ENCODE measurements at regions of chr17 and their contacts with region 1.

Region 1: DNA sequence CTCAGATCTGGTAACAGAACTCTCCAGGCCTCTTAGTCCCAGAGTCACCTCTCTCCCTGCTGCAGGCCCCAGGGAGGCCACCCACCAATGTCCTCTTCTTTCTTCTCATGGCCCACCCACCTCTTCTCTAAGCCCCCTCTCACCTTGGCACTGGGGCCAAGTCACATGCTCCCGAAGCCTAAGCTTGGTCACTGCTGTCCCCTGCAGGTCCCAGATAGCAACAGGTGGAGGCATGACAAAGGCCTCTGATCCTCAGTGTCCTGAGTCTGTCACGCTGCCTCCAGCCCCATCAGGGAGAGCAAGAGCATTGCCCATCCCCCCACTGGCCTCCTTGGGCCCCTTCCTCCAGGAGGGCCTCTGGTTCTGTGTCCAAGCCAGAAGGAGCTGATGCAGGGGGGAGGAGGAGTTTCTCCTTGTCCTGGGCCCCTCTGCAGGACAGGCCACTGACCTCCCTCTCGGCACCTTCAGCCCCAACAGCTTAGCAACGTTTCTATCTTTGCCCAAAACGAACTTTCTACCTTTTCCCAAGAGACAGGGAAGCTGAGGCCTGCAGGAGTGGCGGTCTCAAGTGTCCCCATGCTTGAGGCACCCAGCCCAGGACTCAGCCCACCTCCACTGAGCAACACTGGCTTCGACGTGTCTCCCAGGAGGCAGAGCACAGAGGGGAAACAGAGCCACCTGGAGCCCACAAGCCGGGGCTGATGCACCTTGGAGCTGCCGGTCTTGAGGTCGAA is 8.6 kb downstream of the P2RX1 start:
- DNase-seq: peak; percentile 38
- H3K4me3 Mint-ChIP-seq: no peak overlapping the region
- H3K27ac Mint-ChIP-seq: no peak overlapping the region
- H3K4me1 Mint-ChIP-seq: no peaks in the 10 kb centered on the region
- H3K27me3 Mint-ChIP-seq: no peaks in the 10 kb centered on the region
- CTCF ChIP-seq: peak; percentile 28

Region 2: DNA sequence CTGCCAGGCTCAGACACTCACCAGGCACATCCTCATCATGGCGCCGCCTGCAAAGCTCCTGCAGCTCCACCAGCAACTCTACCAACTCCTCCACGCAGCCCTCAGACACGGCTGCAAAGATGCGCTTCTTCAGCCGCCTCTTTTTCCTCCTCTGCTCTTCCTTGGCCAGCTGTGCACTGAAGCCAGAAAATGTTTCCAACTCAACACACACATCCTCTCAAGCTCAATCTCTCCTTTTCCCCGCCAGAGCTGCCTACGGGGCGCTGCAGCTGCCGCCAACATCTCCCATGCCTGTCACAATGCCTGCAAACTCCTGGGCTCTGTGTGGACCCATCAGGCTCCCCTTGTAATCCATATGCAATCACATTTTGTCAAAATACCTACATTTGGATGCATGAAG is 364.2 kb before region 1 on chr17:
- CTCF ChIA-PET with region 1: no interaction called
- POLR2A ChIA-PET with region 1: no interaction called
- intact Hi-C with region 1: no loop called
- DNase-seq: no peak
- H3K4me3 Mint-ChIP-seq: no peak overlapping the region
- H3K27ac Mint-ChIP-seq: no peak overlapping the region
- H3K4me1 Mint-ChIP-seq: no peaks in the 10 kb centered on the region
- H3K27me3 Mint-ChIP-seq: no peaks in the 10 kb centered on the region
- CTCF ChIP-seq: no peak

Region 3: GRCh38 chr17:3859940-3860339 is 47.7 kb before region 1 on chr17:
- CTCF ChIA-PET with region 1: interaction called, 12 read pairs
- POLR2A ChIA-PET with region 1: no interaction called
- intact Hi-C with region 1: loop called (anchors 1 kb)
- DNase-seq: no peak
- H3K4me3 Mint-ChIP-seq: no peak overlapping the region
- H3K27ac Mint-ChIP-seq: no peak overlapping the region
- H3K4me1 Mint-ChIP-seq: no peaks in the 10 kb centered on the region
- H3K27me3 Mint-ChIP-seq: no peaks in the 10 kb centered on the region
- CTCF ChIP-seq: no peak

Region 4: GRCh38 chr17:3865176-3865575 is 42.5 kb before region 1 on chr17:
- CTCF ChIA-PET with region 1: interaction called, 12 read pairs
- POLR2A ChIA-PET with region 1: no interaction called
- intact Hi-C with region 1: loop called (anchors 1 kb)
- DNase-seq: peak; percentile 11
- H3K4me3 Mint-ChIP-seq: no peak overlapping the region
- H3K27ac Mint-ChIP-seq: no peak overlapping the region
- H3K4me1 Mint-ChIP-seq: no peaks in the 10 kb centered on the region
- H3K27me3 Mint-ChIP-seq: no peaks in the 10 kb centered on the region
- CTCF ChIP-seq: no peak

Region 5: DNA sequence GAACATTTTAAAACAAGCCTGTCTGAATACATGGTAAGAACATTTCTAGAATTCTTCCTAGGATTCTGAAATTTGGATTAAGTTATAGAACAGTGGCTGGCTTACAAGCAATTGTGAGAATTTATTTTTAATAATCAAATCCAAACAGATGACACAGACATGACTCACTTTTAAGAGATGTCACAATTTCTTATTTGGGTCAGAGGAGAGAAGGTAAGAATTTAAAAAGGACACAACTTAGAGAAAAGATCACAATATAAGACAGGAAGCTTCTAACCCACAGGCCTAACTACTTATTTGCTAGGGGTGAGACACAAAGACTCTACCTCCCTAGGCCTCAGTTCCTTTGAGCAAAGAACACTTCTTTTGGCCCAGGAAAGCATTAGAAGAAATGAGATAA is 202.5 kb after region 1 on chr17:
- CTCF ChIA-PET with region 1: no interaction called
- POLR2A ChIA-PET with region 1: no interaction called
- intact Hi-C with region 1: no loop called
- DNase-seq: peak; percentile 38
- H3K4me3 Mint-ChIP-seq: peak overlapping the region; percentile 4
- H3K27ac Mint-ChIP-seq: peak overlapping the region; percentile 79
- H3K4me1 Mint-ChIP-seq: peaks cover 17% of the 10 kb centered on the region
- H3K27me3 Mint-ChIP-seq: no peaks in the 10 kb centered on the region
- CTCF ChIP-seq: no peak

Measured in MCF 10A (cell line).